ENCODE measurements at regions of chr12 and their contacts with region 1.

Region 1: DNA sequence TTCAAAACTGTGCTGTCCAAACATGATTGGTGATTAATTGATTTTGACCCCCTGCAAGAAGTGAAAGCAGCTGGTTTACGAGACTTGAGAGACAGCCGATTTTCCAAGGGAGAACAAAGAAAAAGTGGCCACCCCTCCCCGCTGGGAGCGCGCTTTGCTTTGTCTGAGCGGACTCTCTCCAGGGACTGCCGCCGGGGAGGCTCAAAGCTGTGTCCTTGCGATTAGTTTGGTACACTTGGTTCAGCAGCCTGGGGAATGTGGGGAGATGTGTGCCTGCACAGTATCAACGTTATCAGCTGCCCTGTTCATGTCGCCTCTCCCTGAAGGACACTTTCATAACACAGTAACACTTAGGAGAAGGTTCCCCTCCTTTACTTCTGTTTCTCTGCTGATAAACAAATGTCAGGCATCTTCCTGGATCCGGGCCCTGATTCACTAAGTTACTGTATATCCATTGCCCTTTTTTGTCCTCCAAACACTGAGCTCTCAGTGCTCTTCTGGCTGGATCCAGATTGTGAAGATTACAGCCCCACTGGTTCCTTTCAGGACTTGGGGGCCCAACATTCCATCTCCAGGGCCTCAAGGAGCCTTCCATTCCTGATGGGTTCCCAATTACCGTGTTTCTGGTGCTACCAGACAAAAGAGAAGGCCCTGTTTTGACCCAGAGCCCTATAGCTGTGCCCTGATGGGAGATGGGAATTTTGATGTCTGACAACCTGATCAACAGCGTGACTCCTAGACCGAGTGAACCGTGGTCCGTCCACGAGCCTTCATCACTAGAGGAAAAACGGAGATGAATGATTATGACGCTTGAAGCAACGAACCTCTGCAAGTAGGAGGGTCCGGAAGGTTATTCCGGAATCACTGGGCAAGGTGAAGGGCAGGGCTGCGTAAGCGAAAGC is 31.7 kb upstream of the TUBA1C start:
- ATAC-seq: peak in 6 of 8 experiments; percentile 31 to 71 (median 62)
- H3K4me3 ChIP-seq: peak overlapping the region; percentile 3 to 49 (median 17)
- H3K27ac ChIP-seq: peak overlapping the region; percentile 88
- H3K4me1 ChIP-seq: peaks cover 37 to 53% of the 10 kb centered on the region in 2 donors

Region 2: DNA sequence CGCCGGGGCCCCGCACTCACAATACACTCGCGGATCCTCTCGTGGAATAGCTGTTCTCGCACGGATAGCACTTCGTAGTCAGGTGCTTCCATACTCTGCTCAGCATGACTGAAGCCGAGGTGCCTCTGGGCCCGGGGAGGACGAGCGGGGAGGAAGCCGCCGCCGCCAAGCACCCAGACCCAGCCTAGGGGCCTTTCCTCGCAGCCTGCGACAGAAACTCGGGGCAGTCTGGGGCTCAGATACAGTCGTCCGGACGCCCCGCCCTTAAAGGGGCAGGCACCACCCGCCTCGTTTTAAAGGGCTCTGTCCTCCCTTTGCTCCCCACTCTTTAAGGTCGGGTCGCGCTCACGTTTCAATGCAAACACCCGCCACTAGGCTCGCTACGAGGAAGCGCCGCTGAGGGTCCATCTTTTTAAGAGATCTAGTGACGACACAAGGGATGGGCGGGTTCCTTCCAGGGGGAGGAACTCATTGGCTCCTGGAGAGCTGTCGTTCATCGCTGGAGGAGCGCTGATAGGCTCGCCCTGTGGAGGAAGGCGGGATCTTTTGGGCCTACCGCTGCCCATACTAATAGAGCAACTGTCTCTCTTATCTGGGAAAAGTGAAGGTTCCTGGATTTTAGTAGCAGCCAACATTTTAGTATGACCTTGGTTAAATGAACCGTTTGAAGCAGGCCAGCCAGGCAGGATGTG is 122.6 kb before region 1 on chr12 and contains the start of gene LMBR1L:
- in situ Hi-C with region 1: loop called in 1 of 9 experiments (anchors 25 kb)
- ATAC-seq: peak; percentile 87 to 99 (median 98)
- H3K4me3 ChIP-seq: peak within 1 kb of the TSS; percentile 52 to 98 (median 94)
- H3K27ac ChIP-seq: peak within 1 kb of the TSS; percentile 85 to 95
- H3K4me1 ChIP-seq: peaks cover 11 to 17% of the 10 kb centered on the region in 2 donors
- total RNA-seq, gene LMBR1L: 27.6 to 85.8 (median 67.2) TPM

Region 3: GRCh38 chr12:49130151-49131050 is 102.8 kb before region 1 on chr12:
- in situ Hi-C with region 1: loop called in 2 of 9 experiments (anchors 25 kb)
- ATAC-seq: peak; percentile 61 to 73 (median 68)
- H3K4me3 ChIP-seq: peak overlapping the region; percentile 52 to 94 (median 78)
- H3K27ac ChIP-seq: peak overlapping the region; percentile 96 to 97
- H3K4me1 ChIP-seq: peaks cover 12 to 14% of the 10 kb centered on the region in 2 donors

Region 4: GRCh38 chr12:49503674-49504180 is 270.5 kb after region 1 on chr12:
- in situ Hi-C with region 1: no loop called
- ATAC-seq: no peak
- H3K4me3 ChIP-seq: no peak overlapping the region
- H3K27ac ChIP-seq: no peak overlapping the region
- H3K4me1 ChIP-seq: no peaks in the 10 kb centered on the region

Measured in motor neuron (in vitro differentiated cells).